ENCODE measurements at regions of chr20 and their contacts with region 1.

Region 1: GRCh38 chr20:64119681-64120341 is 12.4 kb upstream of the NPBWR2 start:
- DNase-seq: no peak
- H3K4me3 ChIP-seq: no peak overlapping the region
- H3K27ac ChIP-seq: no peak overlapping the region
- H3K4me1 ChIP-seq: no peaks in the 10 kb centered on the region
- H3K27me3 ChIP-seq: peaks cover 37% of the 10 kb centered on the region
- CTCF ChIP-seq: no peak

Region 2: DNA sequence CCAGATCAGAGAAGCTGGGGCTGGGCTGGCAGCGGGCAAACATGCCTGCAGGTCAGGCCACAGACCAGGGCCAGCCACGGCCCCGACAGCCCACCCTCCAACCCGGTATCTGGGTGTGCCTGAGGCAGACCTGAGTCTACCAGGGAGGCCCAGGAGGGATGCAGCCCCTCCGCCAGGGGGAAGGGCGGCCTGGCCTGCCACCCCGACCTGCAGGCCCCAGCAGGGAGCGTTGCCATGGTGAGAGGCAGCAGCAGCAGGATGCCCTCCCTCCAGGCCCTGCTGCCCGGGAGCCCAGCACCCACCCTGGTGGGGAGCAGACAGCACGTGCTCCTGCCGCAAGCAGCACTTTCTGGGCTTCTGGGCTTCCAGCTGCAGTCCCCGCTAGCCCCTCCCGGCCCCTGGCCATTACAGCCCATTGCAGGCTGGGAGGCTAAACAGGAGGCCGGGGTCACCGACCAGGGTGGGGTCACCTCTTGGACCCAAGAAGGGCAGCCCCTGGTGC is 617.1 kb before region 1 on chr20:
- CTCF ChIA-PET with region 1: interaction called, 13 read pairs
- POLR2A ChIA-PET with region 1: no interaction called
- intact Hi-C with region 1: no loop called
- DNase-seq: no peak
- H3K4me3 ChIP-seq: no peak overlapping the region
- H3K27ac ChIP-seq: no peak overlapping the region
- H3K4me1 ChIP-seq: peaks cover 8% of the 10 kb centered on the region
- H3K27me3 ChIP-seq: peaks cover 5% of the 10 kb centered on the region
- CTCF ChIP-seq: no peak

Region 3: DNA sequence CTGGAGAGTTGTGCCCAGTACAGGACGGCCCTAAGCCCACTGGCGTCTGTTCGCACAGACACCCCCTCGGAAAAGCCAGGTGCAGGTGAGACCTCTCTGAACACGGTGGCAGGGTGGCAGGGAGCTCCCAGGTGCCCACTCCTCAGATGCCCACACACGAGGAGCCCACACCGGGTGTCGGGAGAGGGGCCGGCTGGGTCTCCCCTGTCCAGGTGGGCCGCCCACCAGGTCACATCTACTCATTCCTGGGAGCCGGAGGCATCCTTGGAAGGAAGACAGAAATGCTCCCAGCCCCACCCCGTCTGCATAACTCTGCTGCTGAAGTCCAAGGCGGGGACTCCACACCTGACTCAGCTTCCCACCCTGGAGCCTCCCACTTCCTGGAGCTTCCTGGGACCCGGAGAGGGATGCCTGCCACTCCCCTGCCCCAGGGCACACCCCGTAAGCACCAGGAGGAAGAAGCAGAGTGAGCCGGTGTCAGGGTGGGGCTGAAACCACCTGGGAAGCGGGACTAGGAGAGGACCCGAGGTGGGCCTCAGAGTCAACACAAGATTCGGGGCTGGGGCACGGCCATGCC is 574.8 kb before region 1 on chr20:
- CTCF ChIA-PET with region 1: no interaction called
- POLR2A ChIA-PET with region 1: no interaction called
- intact Hi-C with region 1: no loop called
- DNase-seq: no peak
- H3K4me3 ChIP-seq: no peak overlapping the region
- H3K27ac ChIP-seq: no peak overlapping the region
- H3K4me1 ChIP-seq: no peaks in the 10 kb centered on the region
- H3K27me3 ChIP-seq: peaks cover 48% of the 10 kb centered on the region
- CTCF ChIP-seq: no peak

Region 4: DNA sequence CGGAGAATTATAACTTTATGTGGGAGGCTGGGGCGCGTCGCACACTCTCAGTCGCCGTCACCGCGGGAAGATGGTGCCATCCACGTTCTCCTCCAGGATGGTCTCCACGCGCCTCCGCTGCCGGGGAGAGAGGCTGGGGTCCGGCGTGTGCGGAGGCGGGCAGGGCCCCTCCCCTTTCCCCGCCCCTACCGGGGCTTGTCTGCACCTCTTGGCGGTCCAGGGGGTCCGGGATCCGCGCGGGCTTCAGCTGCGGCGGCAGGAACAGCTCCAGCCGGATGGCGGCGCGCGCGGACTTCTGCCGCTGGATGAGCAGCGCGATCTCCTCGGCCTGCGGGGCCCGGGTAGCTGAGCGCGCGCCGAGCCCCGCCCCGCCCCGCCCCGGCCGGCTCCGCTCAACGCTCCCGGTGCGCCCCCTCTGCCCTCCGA is 36.4 kb before region 1 on chr20:
- CTCF ChIA-PET with region 1: no interaction called
- POLR2A ChIA-PET with region 1: no interaction called
- intact Hi-C with region 1: loop called (anchors 1 kb)
- DNase-seq: peak; percentile 90
- H3K4me3 ChIP-seq: peak overlapping the region; percentile 53
- H3K27ac ChIP-seq: no peak overlapping the region
- H3K4me1 ChIP-seq: peaks cover 20% of the 10 kb centered on the region
- H3K27me3 ChIP-seq: peaks cover 15% of the 10 kb centered on the region
- CTCF ChIP-seq: peak; percentile 69